ENCODE measurements at regions of chr4 and their contacts with region 1.

Region 1: DNA sequence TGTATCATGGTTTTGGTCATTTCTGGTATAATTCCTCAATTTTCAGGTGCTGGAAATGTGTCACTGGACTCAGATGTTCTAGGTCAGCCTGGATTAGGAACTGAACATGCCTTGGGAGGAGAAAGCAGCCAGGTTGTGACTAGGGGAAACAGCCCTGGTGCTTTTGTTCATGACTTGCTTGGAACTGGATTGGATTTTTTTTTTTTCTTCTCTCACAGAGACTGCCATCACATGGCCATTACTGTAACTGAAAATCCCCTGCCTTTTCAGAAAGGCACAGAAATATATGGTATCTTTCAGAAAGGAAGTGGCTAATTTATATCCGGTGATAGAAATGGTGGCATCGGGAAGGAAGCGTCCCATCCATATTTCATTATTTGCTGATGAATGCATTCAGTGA is 34.6 kb downstream of the SEPTIN11 start:
- DNase-seq: peak in 3 of 14 experiments; percentile 67 to 78 (median 67)
- ATAC-seq: peak; percentile 75
- H3K4me3 ChIP-seq: no peak overlapping the region
- H3K4me3 Mint-ChIP-seq: peak overlapping the region; percentile 4
- H3K27ac ChIP-seq: no peak overlapping the region
- H3K27ac Mint-ChIP-seq: peak overlapping the region; percentile 24
- H3K4me1 ChIP-seq: peaks cover 52% of the 10 kb centered on the region
- H3K4me1 Mint-ChIP-seq: peaks cover 94% of the 10 kb centered on the region
- H3K27me3 ChIP-seq: no peaks in the 10 kb centered on the region
- H3K27me3 Mint-ChIP-seq: no peaks in the 10 kb centered on the region
- CTCF ChIP-seq: peak; percentile 41

Region 2: DNA sequence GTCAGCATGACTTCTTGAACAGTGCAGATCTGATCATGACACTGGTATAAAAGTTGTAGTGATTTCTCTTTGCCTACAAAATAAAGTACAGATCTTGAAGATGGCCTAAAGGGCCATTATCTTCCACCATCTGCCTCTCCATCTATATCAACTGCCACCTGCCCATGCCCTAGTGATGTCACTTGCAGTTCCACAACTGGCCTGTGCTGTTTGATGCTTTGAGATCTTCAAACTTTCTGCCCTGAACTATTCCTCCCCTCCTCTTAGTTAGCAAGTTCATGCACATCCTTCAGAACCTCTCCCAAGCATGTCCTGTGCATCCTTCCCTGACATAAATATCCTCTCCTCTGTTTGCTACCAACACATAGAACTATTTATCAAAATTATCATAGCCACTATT is 303.2 kb before region 1 on chr4:
- CTCF ChIA-PET with region 1: no interaction called
- POLR2A ChIA-PET with region 1: no interaction called
- intact Hi-C with region 1: no loop called
- DNase-seq: no peak
- ATAC-seq: no peak
- H3K4me3 ChIP-seq: no peak overlapping the region
- H3K4me3 Mint-ChIP-seq: no peak overlapping the region
- H3K27ac ChIP-seq: no peak overlapping the region
- H3K27ac Mint-ChIP-seq: no peak overlapping the region
- H3K4me1 ChIP-seq: no peaks in the 10 kb centered on the region
- H3K4me1 Mint-ChIP-seq: no peaks in the 10 kb centered on the region
- H3K27me3 ChIP-seq: peaks cover 2 to 15% of the 10 kb centered on the region in 2 experiments
- H3K27me3 Mint-ChIP-seq: peaks cover 15% of the 10 kb centered on the region
- CTCF ChIP-seq: no peak

Region 3: GRCh38 chr4:76949276-76950051 is 34.7 kb before region 1 on chr4 and contains the start of gene SEPTIN11:
- CTCF ChIA-PET with region 1: interaction called, 5 read pairs
- POLR2A ChIA-PET with region 1: interaction called, 9 read pairs
- intact Hi-C with region 1: loop called (anchors 1 to 5 kb)
- DNase-seq: peak; percentile 65 to 93 (median 78)
- ATAC-seq: peak; percentile 79
- H3K4me3 ChIP-seq: peak within 1 kb of the TSS; percentile 75
- H3K4me3 Mint-ChIP-seq: peak within 1 kb of the TSS; percentile 89
- H3K27ac ChIP-seq: no peak within 1 kb of the TSS
- H3K27ac Mint-ChIP-seq: peak within 1 kb of the TSS; percentile 76
- H3K4me1 ChIP-seq: peaks cover 27% of the 10 kb centered on the region
- H3K4me1 Mint-ChIP-seq: peaks cover 21% of the 10 kb centered on the region
- H3K27me3 ChIP-seq: no peaks in the 10 kb centered on the region
- H3K27me3 Mint-ChIP-seq: no peaks in the 10 kb centered on the region
- CTCF ChIP-seq: no peak
- total RNA-seq, gene SEPTIN11: 8.1 to 9.4 TPM

Region 4: DNA sequence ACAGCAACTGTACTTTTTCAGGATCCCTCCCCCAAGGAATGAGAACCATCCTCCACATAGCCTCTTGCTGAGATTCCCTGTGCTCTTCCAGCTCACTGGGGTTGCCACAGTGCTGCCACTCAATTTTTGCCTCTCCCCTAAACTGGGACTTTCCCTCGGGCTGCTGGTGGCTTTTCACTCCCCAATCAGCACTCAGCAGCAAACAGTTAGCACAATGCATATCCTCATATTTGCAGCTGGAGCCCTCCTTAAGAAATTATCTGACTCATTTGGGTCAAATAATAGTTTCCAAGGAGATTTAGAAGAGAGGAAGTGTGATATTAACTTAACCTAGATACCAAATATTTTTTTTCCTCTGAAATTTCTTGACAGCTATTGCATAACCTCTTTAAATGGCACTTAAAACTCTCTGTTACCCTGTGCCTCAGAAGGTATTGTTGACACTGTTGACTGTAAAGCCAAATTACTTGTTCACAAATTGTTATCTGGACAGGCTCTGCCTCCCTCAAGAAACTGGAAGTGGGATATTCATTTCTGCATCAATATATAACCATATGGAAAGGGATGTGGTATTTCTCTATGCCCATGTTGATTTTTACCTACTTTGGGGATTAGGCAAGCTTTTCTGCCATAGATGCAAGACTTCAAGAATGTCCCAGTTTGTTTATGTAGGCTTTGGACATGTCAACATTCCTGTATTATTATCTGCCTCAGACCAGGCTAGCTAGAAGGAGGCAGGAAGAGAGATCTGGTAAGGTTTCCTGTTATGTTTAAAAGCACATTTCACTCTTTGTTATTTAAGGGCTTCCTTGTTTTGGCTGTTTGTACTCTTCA is 23.4 kb after region 1 on chr4:
- CTCF ChIA-PET with region 1: interaction called, 4 read pairs
- POLR2A ChIA-PET with region 1: interaction called, 7 read pairs
- intact Hi-C with region 1: loop called in 1 of 2 experiments (anchors 1 kb)
- DNase-seq: peak in 5 of 14 experiments; percentile 22 to 77 (median 43)
- ATAC-seq: peak; percentile 91
- H3K4me3 ChIP-seq: no peak overlapping the region
- H3K4me3 Mint-ChIP-seq: peak overlapping the region; percentile 54
- H3K27ac ChIP-seq: peak overlapping the region; percentile 20 to 43
- H3K27ac Mint-ChIP-seq: peak overlapping the region; percentile 42
- H3K4me1 ChIP-seq: peaks cover 35% of the 10 kb centered on the region
- H3K4me1 Mint-ChIP-seq: peaks cover 84% of the 10 kb centered on the region
- H3K27me3 ChIP-seq: no peaks in the 10 kb centered on the region
- H3K27me3 Mint-ChIP-seq: no peaks in the 10 kb centered on the region
- CTCF ChIP-seq: no peak

Region 5: GRCh38 chr4:77025643-77026321 is 41.7 kb after region 1 on chr4:
- CTCF ChIA-PET with region 1: interaction called, 3 read pairs
- POLR2A ChIA-PET with region 1: no interaction called
- intact Hi-C with region 1: loop called in 1 of 2 experiments (anchors 5 kb)
- DNase-seq: no peak
- ATAC-seq: no peak
- H3K4me3 ChIP-seq: no peak overlapping the region
- H3K4me3 Mint-ChIP-seq: no peak overlapping the region
- H3K27ac ChIP-seq: no peak overlapping the region
- H3K27ac Mint-ChIP-seq: no peak overlapping the region
- H3K4me1 ChIP-seq: no peaks in the 10 kb centered on the region
- H3K4me1 Mint-ChIP-seq: peaks cover 26% of the 10 kb centered on the region
- H3K27me3 ChIP-seq: no peaks in the 10 kb centered on the region
- H3K27me3 Mint-ChIP-seq: no peaks in the 10 kb centered on the region
- CTCF ChIP-seq: no peak

Measured in CD4-positive, alpha-beta T cell (primary cell).